ENCODE measurements at regions of chr2 and their contacts with region 1.

Region 1: GRCh38 chr2:105576440-105577252 is 168.1 kb upstream of the NCK2 start:
- DNase-seq: no peak
- ATAC-seq: peak; percentile 81
- H3K4me3 Mint-ChIP-seq: no peak overlapping the region
- H3K27ac Mint-ChIP-seq: peak overlapping the region; percentile 89
- H3K4me1 Mint-ChIP-seq: peaks cover 25% of the 10 kb centered on the region
- H3K27me3 Mint-ChIP-seq: no peaks in the 10 kb centered on the region

Region 2: GRCh38 chr2:105625632-105626031 is 49.0 kb after region 1 on chr2:
- CTCF ChIA-PET with region 1: no interaction called
- POLR2A ChIA-PET with region 1: no interaction called
- intact Hi-C with region 1: loop called in 1 of 2 experiments (anchors 1 kb)
- DNase-seq: no peak
- ATAC-seq: no peak
- H3K4me3 Mint-ChIP-seq: no peak overlapping the region
- H3K27ac Mint-ChIP-seq: no peak overlapping the region
- H3K4me1 Mint-ChIP-seq: no peaks in the 10 kb centered on the region
- H3K27me3 Mint-ChIP-seq: peaks cover 1% of the 10 kb centered on the region

Region 3: DNA sequence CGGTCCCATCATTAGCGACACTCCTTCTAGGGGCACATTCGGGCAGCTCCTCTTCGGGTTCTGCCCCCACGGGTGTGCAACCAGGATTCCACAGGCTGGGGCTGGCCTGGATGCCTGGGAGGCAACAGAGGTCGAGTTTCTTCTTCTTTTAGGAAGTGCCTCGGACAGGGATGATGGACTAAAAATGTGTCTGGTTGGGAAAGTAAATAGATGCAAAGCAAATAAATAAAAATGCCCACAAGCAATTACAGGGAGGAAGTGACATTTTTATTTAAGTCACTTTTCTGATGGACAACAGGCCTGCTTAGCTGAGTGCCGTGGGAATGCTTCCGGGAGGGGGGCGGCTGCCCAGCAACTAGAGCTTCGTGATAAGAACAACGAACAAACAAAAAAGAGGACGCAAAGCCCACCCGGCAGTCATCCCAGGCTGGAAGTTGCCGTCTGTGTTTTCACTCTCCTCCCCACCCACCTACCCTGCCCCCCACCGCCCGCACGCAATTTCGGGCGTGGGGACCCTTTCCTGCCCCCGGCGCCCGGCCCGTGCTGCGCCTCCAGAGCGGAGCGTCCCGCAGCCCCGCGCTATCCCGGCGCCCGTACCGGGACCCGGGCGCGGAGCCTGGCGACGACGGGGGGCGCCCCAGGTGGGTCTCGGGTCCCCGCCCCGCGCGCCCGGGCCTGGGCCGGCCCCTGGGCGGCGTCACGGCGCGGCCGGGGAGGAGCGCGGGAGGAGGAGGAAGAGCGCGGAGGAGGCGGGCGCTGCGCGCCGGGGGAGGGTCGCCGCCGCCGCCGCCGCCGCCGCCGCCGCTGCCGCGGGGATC is 167.7 kb after region 1 on chr2:
- CTCF ChIA-PET with region 1: interaction called, 7 read pairs
- POLR2A ChIA-PET with region 1: interaction called, 3 read pairs
- intact Hi-C with region 1: loop called (anchors 2 kb)
- DNase-seq: peak; percentile 79
- ATAC-seq: peak; percentile 42
- H3K4me3 Mint-ChIP-seq: peak overlapping the region; percentile 77
- H3K27ac Mint-ChIP-seq: peak overlapping the region; percentile 87
- H3K4me1 Mint-ChIP-seq: peaks cover 70% of the 10 kb centered on the region
- H3K27me3 Mint-ChIP-seq: no peaks in the 10 kb centered on the region

Region 4: DNA sequence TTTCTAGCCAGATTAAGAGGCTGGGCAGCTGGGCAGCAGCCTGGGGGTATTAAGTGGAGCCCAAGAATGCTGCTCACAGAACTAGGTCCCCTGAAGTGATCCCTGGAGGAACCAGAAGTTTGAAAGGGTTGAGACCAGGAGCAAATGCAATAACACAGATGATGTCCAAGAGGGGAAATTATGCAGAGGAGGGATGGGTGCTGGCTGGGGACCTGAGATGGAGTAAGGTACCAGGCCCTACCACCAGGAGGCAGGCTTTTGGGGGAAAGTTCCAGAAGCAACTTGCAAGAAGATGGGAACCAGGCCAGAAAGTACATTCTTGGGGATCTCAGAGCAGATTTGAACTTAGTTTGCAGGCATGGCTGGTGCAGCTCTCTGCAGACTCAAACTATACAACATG is 343.2 kb after region 1 on chr2:
- CTCF ChIA-PET with region 1: no interaction called
- POLR2A ChIA-PET with region 1: interaction called, 11 read pairs
- intact Hi-C with region 1: no loop called
- DNase-seq: peak; percentile 74
- ATAC-seq: peak; percentile 72
- H3K4me3 Mint-ChIP-seq: no peak overlapping the region
- H3K27ac Mint-ChIP-seq: no peak overlapping the region
- H3K4me1 Mint-ChIP-seq: peaks cover 31% of the 10 kb centered on the region
- H3K27me3 Mint-ChIP-seq: no peaks in the 10 kb centered on the region

Region 5: DNA sequence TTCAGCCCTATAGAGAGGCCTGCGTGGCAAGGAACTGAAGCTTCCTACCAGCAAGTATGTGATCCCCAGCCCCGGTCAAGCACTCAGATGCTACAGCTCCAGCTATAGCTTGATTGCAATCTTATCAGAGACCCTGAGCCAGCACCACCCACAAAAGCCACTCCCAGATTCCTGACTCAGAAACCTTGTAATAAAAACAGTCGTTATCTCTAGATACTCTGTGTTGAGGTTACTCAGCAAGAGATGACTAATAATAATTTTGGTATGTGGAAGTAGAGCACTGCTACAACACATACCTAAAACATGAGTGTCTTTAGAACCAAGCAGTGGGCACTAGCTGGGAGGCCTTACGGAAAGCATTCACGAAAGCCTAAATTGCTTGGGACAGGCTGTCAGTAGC is 400.6 kb after region 1 on chr2:
- CTCF ChIA-PET with region 1: interaction called, 4 read pairs
- POLR2A ChIA-PET with region 1: no interaction called
- intact Hi-C with region 1: loop called in 1 of 2 experiments (anchors 10 kb)
- DNase-seq: peak; percentile 20
- ATAC-seq: peak; percentile 76
- H3K4me3 Mint-ChIP-seq: no peak overlapping the region
- H3K27ac Mint-ChIP-seq: no peak overlapping the region
- H3K4me1 Mint-ChIP-seq: peaks cover 38% of the 10 kb centered on the region
- H3K27me3 Mint-ChIP-seq: no peaks in the 10 kb centered on the region